ENCODE measurements at regions of chr1 and their contacts with region 1.

Region 1: GRCh38 chr1:201361652-201362504 is 15.6 kb downstream of the TNNT2 start:
- H3K4me3 ChIP-seq: no peak overlapping the region
- H3K27ac ChIP-seq: no peak overlapping the region
- H3K4me1 ChIP-seq: no peaks in the 10 kb centered on the region
- CTCF ChIP-seq: peak; percentile 82

Region 2: DNA sequence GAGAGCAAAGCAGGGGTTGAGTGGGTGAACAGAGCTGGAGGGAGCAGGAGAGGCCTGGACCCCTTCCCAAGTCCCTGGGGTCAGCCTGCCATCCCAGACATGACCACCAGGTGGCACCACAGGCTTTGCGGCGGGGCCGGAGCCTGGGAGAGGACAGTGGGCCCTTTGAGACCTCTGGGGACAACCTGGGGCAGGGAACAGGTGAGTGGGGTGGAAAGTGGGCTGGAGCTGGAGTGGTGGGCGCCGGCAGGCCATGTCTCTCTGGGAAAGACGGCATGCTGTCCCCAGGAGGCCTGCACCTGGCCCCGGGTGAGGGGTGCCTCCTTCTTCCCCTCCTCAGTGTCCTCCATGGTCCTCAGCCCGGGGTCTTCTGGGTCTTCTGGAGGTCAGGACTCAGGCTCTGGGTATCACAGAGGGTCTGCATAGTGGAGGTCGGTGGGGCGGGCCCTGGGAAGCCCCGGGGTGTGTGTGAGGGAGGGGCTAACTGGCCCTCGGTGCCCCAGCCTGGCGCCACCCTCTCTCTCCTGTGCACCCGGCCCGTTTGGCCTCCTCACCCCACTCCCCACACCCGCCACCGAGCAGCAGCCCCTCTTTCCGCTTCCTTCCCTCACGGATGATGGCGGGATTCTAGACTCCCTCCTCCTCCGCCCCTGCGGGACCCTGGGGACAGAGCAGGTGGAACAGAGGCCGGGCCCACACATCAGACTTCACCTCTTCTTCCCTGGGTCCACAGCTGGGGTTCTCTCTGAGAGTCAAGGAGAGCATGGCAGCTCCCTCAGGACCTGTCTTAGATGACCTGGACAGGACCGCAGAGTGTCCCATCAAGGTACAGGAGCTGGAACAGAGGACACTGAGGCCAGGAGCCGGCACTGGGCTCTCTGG is 107.0 kb before region 1 on chr1:
- CTCF ChIA-PET with region 1: interaction called, 145 read pairs
- POLR2A ChIA-PET with region 1: no interaction called
- H3K4me3 ChIP-seq: no peak overlapping the region
- H3K27ac ChIP-seq: no peak overlapping the region
- H3K4me1 ChIP-seq: no peaks in the 10 kb centered on the region
- CTCF ChIP-seq: peak; percentile 91

Region 3: GRCh38 chr1:201309426-201309825 is 52.5 kb before region 1 on chr1:
- CTCF ChIA-PET with region 1: interaction called, 25 read pairs
- POLR2A ChIA-PET with region 1: no interaction called
- H3K4me3 ChIP-seq: no peak overlapping the region
- H3K27ac ChIP-seq: no peak overlapping the region
- H3K4me1 ChIP-seq: no peaks in the 10 kb centered on the region; the same call in 1 of the 2 replicates
- CTCF ChIP-seq: peak; percentile 83

Region 4: DNA sequence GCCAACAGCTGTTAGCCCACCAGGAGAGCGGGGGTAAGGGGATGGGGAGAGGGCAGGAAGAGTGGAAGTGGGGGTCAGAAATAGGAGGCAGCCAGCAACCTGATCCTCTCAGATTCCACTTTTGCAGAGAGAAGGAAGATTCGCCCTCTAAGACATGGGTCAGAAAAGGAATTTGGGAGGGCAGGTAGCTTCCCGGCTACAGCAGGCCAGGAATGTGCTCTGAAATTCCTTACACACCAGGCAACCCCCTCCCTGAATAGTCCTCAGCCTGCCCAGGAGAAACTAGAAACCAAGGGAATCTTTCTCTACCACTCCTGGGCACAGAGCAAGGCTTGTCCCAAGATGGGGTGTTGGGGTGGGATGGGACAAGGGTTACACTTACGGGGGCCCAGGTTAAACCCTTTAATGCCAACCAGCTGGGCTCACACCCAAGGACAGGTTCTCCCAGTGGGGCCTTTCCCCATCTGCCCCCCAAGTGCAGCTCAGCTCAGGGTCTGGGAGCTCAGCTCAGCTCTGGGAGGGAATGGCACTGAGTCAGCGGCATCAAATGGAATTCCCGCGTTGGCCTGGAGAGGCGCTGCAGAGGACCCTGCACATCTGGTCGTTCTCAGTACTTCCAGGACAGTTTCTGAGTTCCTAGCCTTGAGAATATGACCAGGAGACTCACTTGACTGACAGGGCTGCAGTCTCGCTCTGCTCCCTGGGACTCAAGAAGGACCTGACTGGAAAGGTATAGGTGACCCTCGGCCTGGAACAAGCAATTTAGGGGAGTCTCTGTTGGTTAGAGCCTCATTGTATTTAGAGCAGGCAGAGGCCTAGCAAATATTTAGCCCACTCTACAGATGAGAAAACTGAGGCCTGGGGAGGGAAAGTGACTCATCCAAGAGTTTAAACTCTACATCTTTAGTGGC is 14.8 kb after region 1 on chr1:
- CTCF ChIA-PET with region 1: interaction called, 15 read pairs
- POLR2A ChIA-PET with region 1: no interaction called
- H3K4me3 ChIP-seq: no peak overlapping the region
- H3K27ac ChIP-seq: no peak overlapping the region
- H3K4me1 ChIP-seq: no peaks in the 10 kb centered on the region
- CTCF ChIP-seq: 0 out of 2 replicates have a peak, but pooled peaks have one; percentile 19

Measured in HEK293 (cell line).